B cell (primary cell): ENCODE measurements at regions of chr16 and their contacts with region 1.

Region 1: DNA sequence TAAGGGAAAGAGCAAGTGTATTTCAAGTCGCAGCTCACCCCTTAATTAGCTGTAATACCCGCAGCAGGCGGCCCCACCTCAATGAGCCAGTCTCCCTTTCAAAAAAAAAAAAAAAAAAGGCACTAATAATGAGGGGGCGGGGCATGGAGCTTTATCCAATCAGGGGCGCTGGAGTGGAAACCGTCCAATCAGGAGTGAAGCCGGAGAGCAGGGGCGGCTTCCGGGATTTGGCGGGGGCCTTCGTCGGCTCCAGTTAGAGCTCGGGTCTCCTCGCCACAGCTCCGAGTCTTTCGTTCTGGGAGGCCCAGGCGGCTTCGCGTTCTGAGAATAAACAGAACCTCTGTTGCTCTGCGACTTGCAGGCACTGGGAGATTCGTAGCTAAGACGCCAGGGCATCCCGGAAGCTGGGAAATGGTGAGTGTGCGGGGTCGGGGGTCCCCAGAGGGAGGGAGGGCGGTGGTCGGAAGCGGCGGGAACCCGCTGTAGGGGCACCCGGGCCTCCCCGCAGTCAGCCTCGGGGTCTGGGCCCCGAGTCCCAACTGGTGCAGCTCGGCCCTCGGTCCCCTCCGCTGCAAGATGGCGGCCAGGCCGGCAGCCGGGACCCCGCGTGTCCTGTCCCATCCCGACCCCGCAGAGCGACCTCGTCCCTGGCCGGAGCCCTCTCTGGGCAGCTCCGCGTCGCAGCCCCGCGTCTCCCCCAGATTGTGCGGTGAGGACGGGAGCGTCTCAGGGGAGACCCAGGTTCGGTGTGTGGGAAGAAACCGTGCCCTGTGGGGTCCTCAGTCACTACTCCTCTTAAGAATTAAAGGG is at the start of gene ZNF267:
- DNase-seq: peak; percentile 94
- ATAC-seq: peak; percentile 74
- H3K4me3 ChIP-seq: peak within 1 kb of the TSS; percentile 79 to 99 (median 84)
- H3K4me3 Mint-ChIP-seq: peak within 1 kb of the TSS; percentile 95
- H3K27ac ChIP-seq: peak within 1 kb of the TSS; percentile 89 to 92
- H3K27ac Mint-ChIP-seq: peak within 1 kb of the TSS; percentile 97
- H3K4me1 ChIP-seq: peaks cover 58 to 66% of the 10 kb centered on the region in 2 donors
- H3K4me1 Mint-ChIP-seq: peaks cover 83% of the 10 kb centered on the region
- H3K27me3 ChIP-seq: no peaks in the 10 kb centered on the region
- H3K27me3 Mint-ChIP-seq: no peaks in the 10 kb centered on the region
- CTCF ChIP-seq: no peak
- total RNA-seq, gene ZNF267: 68.1 and 73.8 TPM in 2 replicates

Region 2: GRCh38 chr16:31265329-31266245 is 608.2 kb before region 1 on chr16:
- CTCF ChIA-PET with region 1: no interaction called
- POLR2A ChIA-PET with region 1: no interaction called
- intact Hi-C with region 1: loop called (anchors 10 kb)
- DNase-seq: peak; percentile 79
- ATAC-seq: peak; percentile 90
- H3K4me3 ChIP-seq: no peak overlapping the region
- H3K4me3 Mint-ChIP-seq: peak overlapping the region; percentile 72
- H3K27ac ChIP-seq: no peak overlapping the region
- H3K27ac Mint-ChIP-seq: peak overlapping the region; percentile 80
- H3K4me1 ChIP-seq: peaks cover 38 to 56% of the 10 kb centered on the region in 2 donors
- H3K4me1 Mint-ChIP-seq: peaks cover 47% of the 10 kb centered on the region
- H3K27me3 ChIP-seq: peaks cover 0 to 6% (median 0%) of the 10 kb centered on the region in 4 experiments
- H3K27me3 Mint-ChIP-seq: no peaks in the 10 kb centered on the region
- CTCF ChIP-seq: no peak

Region 3: GRCh38 chr16:31476303-31477219 is 397.2 kb before region 1 on chr16:
- CTCF ChIA-PET with region 1: no interaction called
- POLR2A ChIA-PET with region 1: no interaction called
- intact Hi-C with region 1: loop called (anchors 5 kb)
- DNase-seq: peak; percentile 81
- ATAC-seq: peak; percentile 91
- H3K4me3 ChIP-seq: peak overlapping the region in 4 of 5 experiments; percentile 57 to 65 (median 62)
- H3K4me3 Mint-ChIP-seq: peak overlapping the region; percentile 90
- H3K27ac ChIP-seq: no peak overlapping the region
- H3K27ac Mint-ChIP-seq: peak overlapping the region; percentile 83
- H3K4me1 ChIP-seq: peaks cover 19 to 28% of the 10 kb centered on the region in 2 donors
- H3K4me1 Mint-ChIP-seq: peaks cover 33% of the 10 kb centered on the region
- H3K27me3 ChIP-seq: peaks cover 0 to 21% (median 8%) of the 10 kb centered on the region in 4 experiments
- H3K27me3 Mint-ChIP-seq: peaks cover 8% of the 10 kb centered on the region
- CTCF ChIP-seq: no peak

Region 4: GRCh38 chr16:31713071-31713944 is 160.5 kb before region 1 on chr16:
- CTCF ChIA-PET with region 1: interaction called, 5 read pairs
- POLR2A ChIA-PET with region 1: interaction called, 7 read pairs
- intact Hi-C with region 1: loop called (anchors 5 kb)
- DNase-seq: peak; percentile 93
- ATAC-seq: peak; percentile 96
- H3K4me3 ChIP-seq: peak overlapping the region; percentile 85 to 98 (median 89)
- H3K4me3 Mint-ChIP-seq: peak overlapping the region; percentile 98
- H3K27ac ChIP-seq: peak overlapping the region; percentile 89 to 93
- H3K27ac Mint-ChIP-seq: peak overlapping the region; percentile 98
- H3K4me1 ChIP-seq: peaks cover 30 to 31% of the 10 kb centered on the region in 2 donors
- H3K4me1 Mint-ChIP-seq: peaks cover 44% of the 10 kb centered on the region
- H3K27me3 ChIP-seq: no peaks in the 10 kb centered on the region
- H3K27me3 Mint-ChIP-seq: no peaks in the 10 kb centered on the region
- CTCF ChIP-seq: peak; percentile 15

Region 5: DNA sequence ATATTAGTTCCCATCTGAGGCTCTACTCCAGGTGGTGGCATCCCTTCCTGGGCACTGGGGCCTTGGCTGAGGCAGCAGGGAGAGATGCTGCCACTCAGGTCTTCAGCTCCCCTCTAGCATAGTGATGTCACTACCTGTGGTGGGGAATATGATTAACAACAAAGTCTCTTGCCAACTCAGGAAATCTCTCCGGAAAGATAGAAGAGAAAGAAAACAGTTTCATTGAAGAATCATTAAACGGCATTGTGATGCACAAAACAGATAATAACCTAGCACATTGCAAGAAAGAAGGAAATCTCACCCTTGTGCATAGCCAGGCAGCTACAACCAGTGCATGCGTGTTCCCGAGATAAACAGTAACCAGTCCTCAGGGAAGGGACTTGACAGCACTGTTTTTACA is 12.3 kb before region 1 on chr16:
- CTCF ChIA-PET with region 1: interaction called, 61 read pairs
- POLR2A ChIA-PET with region 1: no interaction called
- intact Hi-C with region 1: loop called (anchors 1 kb)
- DNase-seq: no peak
- ATAC-seq: no peak
- H3K4me3 ChIP-seq: no peak overlapping the region
- H3K4me3 Mint-ChIP-seq: no peak overlapping the region
- H3K27ac ChIP-seq: no peak overlapping the region
- H3K27ac Mint-ChIP-seq: no peak overlapping the region
- H3K4me1 ChIP-seq: no peaks in the 10 kb centered on the region
- H3K4me1 Mint-ChIP-seq: no peaks in the 10 kb centered on the region
- H3K27me3 ChIP-seq: peaks cover 0 to 3% (median 0%) of the 10 kb centered on the region in 4 experiments
- H3K27me3 Mint-ChIP-seq: peaks cover 22% of the 10 kb centered on the region
- CTCF ChIP-seq: no peak